Naive thymus-derived CD8-positive, alpha-beta T cell (primary cell): ENCODE measurements at regions of chr16 and their contacts with region 1.

Region 1: GRCh38 chr16:50281964-50282538 is 15.7 kb downstream of the ADCY7 start:
- DNase-seq: peak in 9 of 10 donors; percentile 33 to 73 (median 52)
- ATAC-seq: peak; percentile 58 to 76
- H3K4me3 Mint-ChIP-seq: peak overlapping the region; percentile 62 to 88 (median 78)
- H3K27ac Mint-ChIP-seq: peak overlapping the region; percentile 66 to 97 (median 90)
- H3K4me1 Mint-ChIP-seq: peaks cover 55 to 99% (median 94%) of the 10 kb centered on the region in 4 donors
- H3K27me3 Mint-ChIP-seq: no peaks in the 10 kb centered on the region

Region 2: DNA sequence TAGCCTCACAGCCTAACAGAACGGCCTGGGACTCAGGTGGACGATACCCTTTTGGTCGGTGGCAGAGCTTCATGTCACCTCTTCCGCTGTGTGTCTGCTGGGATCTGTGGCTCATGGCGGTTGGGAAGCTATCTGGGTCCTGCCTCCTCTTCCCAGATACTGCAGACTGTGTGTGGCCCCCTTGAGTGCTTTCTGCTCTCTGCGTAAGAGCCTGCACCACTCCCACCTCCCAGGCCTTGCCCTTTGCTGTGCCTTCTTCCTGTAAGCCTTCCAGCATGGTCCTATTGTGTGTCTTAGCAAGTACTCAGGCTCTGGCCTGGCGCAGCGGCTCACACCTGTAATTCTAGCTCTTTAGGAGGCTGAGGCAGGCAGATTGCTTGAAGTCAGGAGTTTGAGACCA is 33.2 kb before region 1 on chr16:
- POLR2A ChIA-PET with region 1: no interaction called
- DNase-seq: no peak
- ATAC-seq: no peak
- H3K4me3 Mint-ChIP-seq: peak overlapping the region in 4 of 10 donors; percentile 22 to 79 (median 47)
- H3K27ac Mint-ChIP-seq: peak overlapping the region in 3 of 10 donors; percentile 4 to 91 (median 52)
- H3K4me1 Mint-ChIP-seq: peaks cover 6 to 26% (median 18%) of the 10 kb centered on the region in 4 donors
- H3K27me3 Mint-ChIP-seq: no peaks in the 10 kb centered on the region

Region 3: GRCh38 chr16:50266337-50267091 is 15.5 kb before region 1 on chr16 and contains the start of gene ADCY7:
- POLR2A ChIA-PET with region 1: interaction called, 238 read pairs
- DNase-seq: peak; percentile 69 to 89 (median 78)
- ATAC-seq: peak; percentile 90 to 91
- H3K4me3 Mint-ChIP-seq: peak within 1 kb of the TSS; percentile 90 to 99 (median 96)
- H3K27ac Mint-ChIP-seq: peak within 1 kb of the TSS; percentile 91 to 99 (median 96)
- H3K4me1 Mint-ChIP-seq: peaks cover 44 to 97% (median 81%) of the 10 kb centered on the region in 4 donors
- H3K27me3 Mint-ChIP-seq: no peaks in the 10 kb centered on the region
- polyA plus RNA-seq, gene ADCY7: 60.1 to 72.8 (median 64.6) TPM

Region 4: DNA sequence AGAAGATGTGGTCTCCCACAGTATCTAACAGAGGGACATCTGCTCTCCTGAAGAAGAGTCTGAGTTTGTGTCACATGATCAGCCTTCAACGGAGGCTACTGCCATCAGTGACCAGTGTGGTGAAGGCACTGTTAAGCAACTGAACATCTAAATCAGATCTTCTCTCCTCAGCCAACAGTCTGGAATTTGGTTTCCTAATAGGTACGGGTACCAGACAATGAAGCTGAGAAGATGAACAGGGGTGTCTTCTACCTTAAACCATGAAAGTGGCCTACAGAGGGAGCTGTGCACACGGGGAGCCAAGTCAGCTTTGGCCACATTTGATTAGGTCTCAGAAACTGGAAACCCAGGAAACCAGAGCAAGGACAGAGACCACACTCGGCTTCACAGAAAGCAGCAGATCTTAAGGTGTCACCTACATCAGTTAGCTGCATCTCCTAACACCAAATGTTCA is 44.9 kb after region 1 on chr16:
- POLR2A ChIA-PET with region 1: no interaction called
- DNase-seq: peak in 9 of 10 donors; percentile 46 to 90 (median 75)
- ATAC-seq: peak; percentile 86 to 97
- H3K4me3 Mint-ChIP-seq: peak overlapping the region in 6 of 10 donors; percentile 7 to 47 (median 31)
- H3K27ac Mint-ChIP-seq: peak overlapping the region; percentile 74 to 94 (median 87)
- H3K4me1 Mint-ChIP-seq: peaks cover 28 to 59% (median 48%) of the 10 kb centered on the region in 4 donors
- H3K27me3 Mint-ChIP-seq: no peaks in the 10 kb centered on the region

Region 5: GRCh38 chr16:50505714-50506542 is 223.9 kb after region 1 on chr16:
- POLR2A ChIA-PET with region 1: interaction called, 10 read pairs
- DNase-seq: no peak
- ATAC-seq: no peak
- H3K4me3 Mint-ChIP-seq: no peak overlapping the region
- H3K27ac Mint-ChIP-seq: peak overlapping the region in 1 of 10 donors; percentile 16
- H3K4me1 Mint-ChIP-seq: peaks cover 0 to 6% (median 0%) of the 10 kb centered on the region in 4 donors
- H3K27me3 Mint-ChIP-seq: peaks cover 0 to 6% (median 0%) of the 10 kb centered on the region in 5 donors